Lower lobe of right lung (tissue), 2 donors: ENCODE measurements at regions of chr4 and their contacts with region 1.

Region 1: DNA sequence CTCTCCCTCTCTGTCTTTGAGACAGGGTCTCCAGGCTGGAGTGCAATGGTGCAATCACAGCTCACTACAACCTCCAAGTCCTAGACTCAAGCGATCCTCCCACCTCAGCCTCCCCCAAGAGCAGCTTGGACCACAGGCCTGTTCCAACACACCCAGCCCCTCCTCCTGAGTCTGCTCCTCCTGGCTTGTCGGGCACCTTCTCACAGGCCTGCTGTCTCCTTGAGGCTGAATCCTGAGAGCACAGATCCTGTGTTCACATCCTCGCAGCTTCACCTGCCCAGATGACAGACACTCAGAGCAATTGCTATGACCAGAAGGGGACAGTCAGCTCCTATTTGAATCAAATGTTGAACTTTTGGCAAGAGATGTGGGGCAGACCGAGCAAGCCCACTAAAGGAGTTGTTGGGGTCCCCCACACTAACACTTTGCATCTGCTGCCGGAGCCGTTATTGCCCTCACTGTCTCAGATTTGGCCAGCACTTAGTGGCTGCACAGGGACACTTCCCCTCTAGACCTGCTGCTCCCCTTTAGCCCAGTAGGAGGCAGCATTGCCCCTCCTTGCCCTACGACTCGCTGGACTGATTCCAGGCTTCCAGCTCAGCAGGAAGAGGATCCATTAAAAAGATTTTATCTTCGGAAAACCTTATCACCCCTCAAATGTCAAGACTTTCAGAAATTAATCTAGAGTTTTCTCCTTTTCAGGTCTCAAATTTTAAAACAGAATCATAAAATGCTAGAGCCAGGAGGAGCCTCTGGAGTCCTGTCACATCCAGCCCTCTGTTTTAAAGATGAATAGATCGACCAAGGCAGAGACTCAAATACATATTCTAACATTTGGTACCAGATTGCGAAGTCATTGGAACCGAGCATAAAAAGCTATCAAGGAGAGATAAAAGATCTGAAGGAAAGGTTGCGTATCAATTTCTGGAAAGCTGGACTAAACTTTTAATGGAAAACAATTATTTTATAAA is 113.7 kb downstream of the USP46 start:
- DNase-seq: peak; percentile 67
- ATAC-seq: peak; percentile 91 to 96
- H3K4me3 ChIP-seq: no peak overlapping the region
- H3K27ac ChIP-seq: no peak overlapping the region
- H3K4me1 ChIP-seq: no peaks in the 10 kb centered on the region
- H3K27me3 ChIP-seq: no peaks in the 10 kb centered on the region
- CTCF ChIP-seq: peak; percentile 94

Region 2: DNA sequence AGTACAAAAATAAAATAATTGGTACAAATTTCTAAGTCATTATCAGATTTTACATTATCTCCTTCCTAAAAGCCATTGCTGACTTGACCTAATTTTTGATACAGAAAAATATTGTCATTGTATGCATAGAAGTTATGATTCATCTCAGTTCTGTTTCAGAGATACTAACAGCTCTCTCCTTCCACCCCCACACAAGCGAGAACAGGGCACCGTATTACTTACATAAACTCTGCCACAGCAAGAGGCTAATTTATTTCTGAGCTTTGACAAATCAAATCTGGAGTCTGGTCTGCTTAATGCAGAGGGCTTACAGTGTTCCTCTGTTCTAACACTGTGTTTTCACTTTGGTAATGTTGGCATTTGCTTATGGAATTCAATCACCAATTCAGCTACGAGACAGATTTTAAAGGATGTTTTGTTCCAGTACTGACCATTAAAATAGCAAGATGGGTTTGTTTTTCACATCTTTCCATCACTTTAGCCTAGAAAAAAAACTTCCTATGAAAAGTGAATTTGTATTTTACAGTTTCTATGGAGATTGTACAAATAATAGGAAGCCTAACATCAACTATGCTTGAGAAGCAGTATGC is 68.1 kb before region 1 on chr4:
- intact Hi-C with region 1: no loop called
- DNase-seq: no peak
- ATAC-seq: no peak
- H3K4me3 ChIP-seq: no peak overlapping the region
- H3K27ac ChIP-seq: no peak overlapping the region
- H3K4me1 ChIP-seq: no peaks in the 10 kb centered on the region
- H3K27me3 ChIP-seq: no peaks in the 10 kb centered on the region
- CTCF ChIP-seq: no peak

Region 3: GRCh38 chr4:52983563-52984303 is 438.3 kb after region 1 on chr4:
- intact Hi-C with region 1: loop called (anchors 5 kb)
- DNase-seq: no peak
- ATAC-seq: peak; percentile 68 to 92
- H3K4me3 ChIP-seq: no peak overlapping the region
- H3K27ac ChIP-seq: no peak overlapping the region
- H3K4me1 ChIP-seq: peaks cover 20% of the 10 kb centered on the region
- H3K27me3 ChIP-seq: no peaks in the 10 kb centered on the region
- CTCF ChIP-seq: peak; percentile 74